Heart right ventricle (tissue), 16 donors: ENCODE measurements at regions of chr9 and their contacts with region 1.

Region 1: DNA sequence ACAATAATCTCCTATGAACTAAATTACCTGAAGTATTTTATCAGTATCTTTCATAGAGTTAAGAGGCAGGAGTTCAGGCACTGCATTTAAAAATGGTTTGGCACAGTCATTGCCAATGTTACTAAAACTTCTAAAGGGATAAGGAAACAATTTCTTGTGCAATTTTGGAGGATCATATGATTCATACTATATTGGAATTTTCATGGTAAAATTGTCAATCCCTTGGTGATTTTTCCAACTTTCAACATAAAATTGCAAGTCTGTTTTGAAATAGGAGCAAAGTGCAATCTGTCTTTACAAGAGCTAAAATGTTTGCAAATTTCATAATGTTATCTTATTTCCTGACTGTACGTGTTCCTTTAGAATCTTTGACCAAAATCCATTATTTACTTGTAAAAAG is 211.1 kb downstream of the DMRTA1 start:
- DNase-seq: no peak
- ATAC-seq: no peak
- H3K4me3 ChIP-seq: no peak overlapping the region
- H3K27ac ChIP-seq: no peak overlapping the region
- H3K4me1 ChIP-seq: no peaks in the 10 kb centered on the region
- H3K27me3 ChIP-seq: no peaks in the 10 kb centered on the region
- CTCF ChIP-seq: no peak

Region 2: GRCh38 chr9:21160178-21160577 is 1497.5 kb before region 1 on chr9:
- intact Hi-C with region 1: loop called in 1 of 10 experiments (anchors 10 kb)
- DNase-seq: no peak
- ATAC-seq: no peak
- H3K4me3 ChIP-seq: no peak overlapping the region
- H3K27ac ChIP-seq: no peak overlapping the region
- H3K4me1 ChIP-seq: peaks cover 0 to 15% (median 0%) of the 10 kb centered on the region in 9 donors
- H3K27me3 ChIP-seq: no peaks in the 10 kb centered on the region
- CTCF ChIP-seq: no peak